B cell (primary cell): ENCODE measurements at regions of chr7 and their contacts with region 1.

Region 1: DNA sequence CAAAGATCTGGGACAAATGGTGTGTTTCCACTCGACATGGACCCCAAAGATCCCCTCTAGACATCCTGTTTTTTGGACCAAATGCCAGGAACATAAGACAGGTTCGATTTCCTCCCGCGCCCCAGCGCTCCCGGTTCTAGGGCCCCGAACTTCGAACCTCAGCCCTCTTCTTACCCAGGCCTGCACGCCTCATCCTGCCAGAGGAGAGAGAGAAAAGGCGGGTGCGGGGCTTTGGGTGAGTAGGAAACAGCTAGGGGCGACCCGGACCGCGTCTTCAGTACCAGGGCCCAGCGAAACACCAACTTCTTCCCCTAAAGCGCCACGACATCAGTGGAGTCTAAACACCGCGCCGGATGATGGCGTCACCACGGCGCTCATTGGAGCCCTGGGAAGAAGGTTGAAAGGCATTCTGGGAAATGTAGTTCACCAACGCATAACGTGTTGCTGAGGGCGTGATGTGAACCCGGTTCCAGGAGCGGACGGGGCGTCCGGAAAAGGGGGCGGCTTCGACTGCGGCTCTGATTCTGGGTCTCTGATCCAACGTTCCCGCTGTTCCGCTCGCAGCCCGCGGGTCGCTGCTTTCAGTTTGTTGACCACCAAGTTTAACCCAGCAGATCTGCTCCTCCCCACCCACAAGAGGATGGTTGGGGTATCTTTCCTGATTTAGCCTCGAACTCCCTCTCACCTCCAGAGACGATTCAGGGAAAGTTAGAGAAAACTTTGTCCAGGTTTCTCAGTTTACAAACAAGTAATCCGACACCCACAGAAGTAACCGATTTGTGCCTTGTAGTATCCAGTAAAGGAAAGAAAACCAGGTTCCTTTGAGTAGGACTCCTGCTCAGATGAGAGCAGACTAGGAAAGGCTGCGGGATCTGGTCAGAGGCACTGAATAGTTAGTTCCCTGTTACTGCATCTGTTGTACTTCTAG is at the start of gene BET1:
- DNase-seq: peak; percentile 97
- ATAC-seq: peak; percentile 94
- H3K4me3 ChIP-seq: peak within 1 kb of the TSS; percentile 78 to 98 (median 96)
- H3K4me3 Mint-ChIP-seq: peak within 1 kb of the TSS; percentile 99
- H3K27ac ChIP-seq: peak within 1 kb of the TSS; percentile 80 to 89
- H3K27ac Mint-ChIP-seq: peak within 1 kb of the TSS; percentile 98
- H3K4me1 ChIP-seq: peaks cover 16% of the 10 kb centered on the region in 2 donors
- H3K4me1 Mint-ChIP-seq: peaks cover 47% of the 10 kb centered on the region
- H3K27me3 ChIP-seq: peaks cover 0 to 5% (median 0%) of the 10 kb centered on the region in 4 experiments
- H3K27me3 Mint-ChIP-seq: no peaks in the 10 kb centered on the region
- CTCF ChIP-seq: no peak
- total RNA-seq, gene BET1: 36.1 and 40.7 TPM in 2 replicates

Region 2: DNA sequence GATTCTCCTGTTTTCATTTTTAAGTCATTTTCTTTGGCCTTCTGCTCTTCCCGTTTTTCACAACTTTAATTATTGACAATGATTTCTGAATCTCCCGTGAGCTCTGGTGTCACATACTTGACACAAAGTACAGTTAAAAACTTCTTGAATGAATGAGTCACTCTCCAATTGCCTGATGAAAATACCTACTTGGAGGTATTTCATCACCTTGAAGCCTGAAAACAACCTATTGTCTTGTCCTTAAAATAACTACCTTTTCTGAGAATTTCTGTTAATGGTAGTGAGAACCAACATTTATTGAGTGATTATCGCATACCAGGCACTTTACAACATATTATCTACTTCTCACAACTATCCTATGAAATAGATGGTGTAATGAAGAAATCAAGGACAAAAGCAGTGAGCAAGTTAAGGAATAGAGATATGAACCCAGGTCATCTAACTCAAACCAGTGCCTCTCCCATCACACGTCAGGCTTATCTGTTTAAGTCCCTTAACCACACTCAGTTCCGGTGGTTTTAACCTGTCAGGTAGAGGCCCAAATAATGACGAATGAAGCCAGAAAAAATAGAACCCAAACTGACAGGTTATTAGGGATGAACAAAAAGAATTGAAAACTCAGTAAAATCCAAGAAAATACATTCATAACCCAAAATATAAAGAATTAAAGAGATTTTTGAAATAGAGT is 11.7 kb before region 1 on chr7:
- CTCF ChIA-PET with region 1: no interaction called
- POLR2A ChIA-PET with region 1: no interaction called
- intact Hi-C with region 1: loop called (anchors 1 kb)
- DNase-seq: no peak
- ATAC-seq: no peak
- H3K4me3 ChIP-seq: no peak overlapping the region
- H3K4me3 Mint-ChIP-seq: no peak overlapping the region
- H3K27ac ChIP-seq: no peak overlapping the region
- H3K27ac Mint-ChIP-seq: no peak overlapping the region
- H3K4me1 ChIP-seq: no peaks in the 10 kb centered on the region
- H3K4me1 Mint-ChIP-seq: peaks cover 5% of the 10 kb centered on the region
- H3K27me3 ChIP-seq: no peaks in the 10 kb centered on the region
- H3K27me3 Mint-ChIP-seq: no peaks in the 10 kb centered on the region
- CTCF ChIP-seq: no peak

Region 3: DNA sequence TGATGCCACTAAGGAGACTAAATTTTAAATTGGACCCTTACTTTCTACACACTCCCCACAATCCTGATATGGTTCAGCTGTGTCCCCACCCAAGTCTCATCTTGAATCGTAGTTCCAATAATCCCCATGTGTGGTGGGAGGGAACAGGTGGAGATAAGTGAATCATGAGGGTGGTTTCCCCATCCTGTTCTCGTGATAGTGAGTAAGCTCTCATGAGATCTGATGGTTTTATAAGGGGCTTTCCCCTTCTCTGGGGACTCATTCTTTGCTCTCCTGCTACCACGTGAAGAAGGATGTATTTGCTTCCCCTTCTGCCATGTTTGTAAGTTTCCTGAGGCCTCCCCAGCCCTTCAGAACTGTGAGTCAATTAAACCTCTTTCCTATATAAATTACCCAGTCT is 18.3 kb after region 1 on chr7:
- CTCF ChIA-PET with region 1: interaction called, 3 read pairs
- POLR2A ChIA-PET with region 1: no interaction called
- intact Hi-C with region 1: loop called (anchors 1 kb)
- DNase-seq: peak; percentile 70
- ATAC-seq: peak; percentile 82
- H3K4me3 ChIP-seq: no peak overlapping the region
- H3K4me3 Mint-ChIP-seq: peak overlapping the region; percentile 24
- H3K27ac ChIP-seq: peak overlapping the region in 1 of 2 donors; percentile 56
- H3K27ac Mint-ChIP-seq: peak overlapping the region; percentile 69
- H3K4me1 ChIP-seq: peaks cover 0 to 5% of the 10 kb centered on the region in 2 donors
- H3K4me1 Mint-ChIP-seq: peaks cover 10% of the 10 kb centered on the region
- H3K27me3 ChIP-seq: no peaks in the 10 kb centered on the region
- H3K27me3 Mint-ChIP-seq: no peaks in the 10 kb centered on the region
- CTCF ChIP-seq: no peak

Region 4: DNA sequence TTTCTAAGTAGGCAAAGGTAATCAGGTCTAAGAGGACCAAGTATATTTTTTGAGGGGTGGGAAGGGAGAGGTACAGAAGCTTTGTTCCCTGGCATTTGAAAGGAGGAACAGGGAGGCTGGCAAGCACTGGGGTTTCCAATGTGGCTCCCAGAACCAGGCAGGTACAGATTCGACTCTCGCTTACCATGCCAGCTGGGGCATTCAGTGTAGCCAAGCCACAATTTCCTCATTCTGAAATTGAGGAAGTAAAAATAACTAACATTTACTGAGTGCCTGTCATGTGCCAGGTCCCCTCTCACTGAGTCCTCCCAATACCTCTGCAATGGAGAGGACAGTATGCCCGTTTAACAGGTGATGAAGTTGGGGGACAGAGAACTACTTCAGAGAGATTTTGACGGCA is 45.8 kb after region 1 on chr7:
- CTCF ChIA-PET with region 1: no interaction called
- POLR2A ChIA-PET with region 1: interaction called, 3 read pairs
- intact Hi-C with region 1: loop called (anchors 1 kb)
- DNase-seq: peak; percentile 89
- ATAC-seq: peak; percentile 82
- H3K4me3 ChIP-seq: peak overlapping the region in 4 of 5 experiments; percentile 7 to 60 (median 33)
- H3K4me3 Mint-ChIP-seq: peak overlapping the region; percentile 81
- H3K27ac ChIP-seq: peak overlapping the region; percentile 84 to 89
- H3K27ac Mint-ChIP-seq: peak overlapping the region; percentile 91
- H3K4me1 ChIP-seq: peaks cover 67 to 70% of the 10 kb centered on the region in 2 donors
- H3K4me1 Mint-ChIP-seq: peaks cover 67% of the 10 kb centered on the region
- H3K27me3 ChIP-seq: no peaks in the 10 kb centered on the region
- H3K27me3 Mint-ChIP-seq: no peaks in the 10 kb centered on the region
- CTCF ChIP-seq: no peak

Region 5: GRCh38 chr7:94069162-94069739 is 65.0 kb after region 1 on chr7:
- CTCF ChIA-PET with region 1: no interaction called
- POLR2A ChIA-PET with region 1: no interaction called
- intact Hi-C with region 1: loop called (anchors 5 kb)
- DNase-seq: no peak
- ATAC-seq: peak; percentile 69
- H3K4me3 ChIP-seq: peak overlapping the region in 1 of 5 experiments; percentile 13
- H3K4me3 Mint-ChIP-seq: peak overlapping the region; percentile 56
- H3K27ac ChIP-seq: no peak overlapping the region
- H3K27ac Mint-ChIP-seq: peak overlapping the region; percentile 41
- H3K4me1 ChIP-seq: peaks cover 22 to 31% of the 10 kb centered on the region in 2 donors
- H3K4me1 Mint-ChIP-seq: peaks cover 36% of the 10 kb centered on the region
- H3K27me3 ChIP-seq: no peaks in the 10 kb centered on the region
- H3K27me3 Mint-ChIP-seq: no peaks in the 10 kb centered on the region
- CTCF ChIP-seq: no peak

Region 6: DNA sequence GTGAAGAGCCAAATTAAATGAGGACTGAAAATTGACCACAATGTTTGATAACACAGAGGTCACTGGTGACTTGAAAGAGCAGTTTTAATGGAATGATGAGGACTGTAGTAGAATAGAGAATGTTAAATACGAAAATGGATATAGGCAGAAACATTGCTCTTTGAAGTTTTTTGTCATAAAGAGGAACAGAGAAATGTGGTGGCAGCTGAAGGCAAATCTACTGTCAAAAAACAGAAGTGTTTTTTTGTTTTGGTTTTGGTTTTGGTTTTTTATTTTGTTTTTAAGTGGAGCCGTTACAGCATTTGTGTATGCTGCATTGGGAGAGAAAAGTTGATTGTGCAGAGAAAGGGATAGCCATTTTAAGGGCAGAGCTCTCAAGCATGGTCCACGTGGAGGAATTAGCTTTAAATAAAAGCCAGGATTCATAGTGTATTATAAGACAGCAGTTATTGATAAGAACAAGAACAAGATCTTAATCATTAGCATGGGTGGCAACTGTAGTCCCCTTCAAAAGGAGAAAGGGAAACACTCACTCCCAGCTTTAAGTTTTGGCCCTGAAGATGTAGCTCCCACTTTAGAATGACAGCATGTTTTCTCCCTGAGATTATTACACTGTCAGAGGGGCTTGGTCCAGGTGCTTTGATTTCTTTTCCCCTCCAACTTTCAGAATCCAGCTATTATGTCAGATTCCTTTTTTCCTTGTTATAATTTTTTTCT is 156.6 kb after region 1 on chr7:
- CTCF ChIA-PET with region 1: no interaction called
- POLR2A ChIA-PET with region 1: interaction called, 4 read pairs
- intact Hi-C with region 1: loop called (anchors 1 kb)
- DNase-seq: peak; percentile 79
- ATAC-seq: peak; percentile 82
- H3K4me3 ChIP-seq: peak overlapping the region; percentile 1 to 52 (median 33)
- H3K4me3 Mint-ChIP-seq: peak overlapping the region; percentile 84
- H3K27ac ChIP-seq: peak overlapping the region; percentile 73 to 90
- H3K27ac Mint-ChIP-seq: peak overlapping the region; percentile 93
- H3K4me1 ChIP-seq: peaks cover 25 to 29% of the 10 kb centered on the region in 2 donors
- H3K4me1 Mint-ChIP-seq: peaks cover 49% of the 10 kb centered on the region
- H3K27me3 ChIP-seq: no peaks in the 10 kb centered on the region
- H3K27me3 Mint-ChIP-seq: no peaks in the 10 kb centered on the region
- CTCF ChIP-seq: no peak

Region 7: GRCh38 chr7:94657771-94658693 is 653.7 kb after region 1 on chr7:
- CTCF ChIA-PET with region 1: no interaction called
- POLR2A ChIA-PET with region 1: no interaction called
- intact Hi-C with region 1: loop called (anchors 5 kb)
- DNase-seq: peak; percentile 97
- ATAC-seq: peak; percentile 78
- H3K4me3 ChIP-seq: peak overlapping the region in 4 of 5 experiments; percentile 45 to 71 (median 64)
- H3K4me3 Mint-ChIP-seq: peak overlapping the region; percentile 94
- H3K27ac ChIP-seq: no peak overlapping the region
- H3K27ac Mint-ChIP-seq: peak overlapping the region; percentile 82
- H3K4me1 ChIP-seq: peaks cover 16 to 29% of the 10 kb centered on the region in 2 donors
- H3K4me1 Mint-ChIP-seq: peaks cover 26% of the 10 kb centered on the region
- H3K27me3 ChIP-seq: peaks cover 0 to 18% (median 13%) of the 10 kb centered on the region in 4 experiments
- H3K27me3 Mint-ChIP-seq: peaks cover 14% of the 10 kb centered on the region
- CTCF ChIP-seq: no peak